Psoas muscle (tissue), 8 donors: ENCODE measurements at regions of chr20 and their contacts with region 1.

Region 1: GRCh38 chr20:32577657-32578056 is 7.5 kb downstream of the NOL4L start:
- DNase-seq: no peak
- ATAC-seq: no peak
- H3K4me3 ChIP-seq: no peak overlapping the region
- H3K27ac ChIP-seq: no peak overlapping the region
- H3K4me1 ChIP-seq: no peaks in the 10 kb centered on the region
- H3K27me3 ChIP-seq: peaks cover 0 to 2% (median 0%) of the 10 kb centered on the region in 3 donors
- CTCF ChIP-seq: no peak

Region 2: GRCh38 chr20:32509639-32510066 is 68.0 kb before region 1 on chr20:
- intact Hi-C with region 1: no loop called
- DNase-seq: no peak
- ATAC-seq: no peak
- H3K4me3 ChIP-seq: no peak overlapping the region
- H3K27ac ChIP-seq: no peak overlapping the region
- H3K4me1 ChIP-seq: no peaks in the 10 kb centered on the region
- H3K27me3 ChIP-seq: no peaks in the 10 kb centered on the region
- CTCF ChIP-seq: no peak

Region 3: DNA sequence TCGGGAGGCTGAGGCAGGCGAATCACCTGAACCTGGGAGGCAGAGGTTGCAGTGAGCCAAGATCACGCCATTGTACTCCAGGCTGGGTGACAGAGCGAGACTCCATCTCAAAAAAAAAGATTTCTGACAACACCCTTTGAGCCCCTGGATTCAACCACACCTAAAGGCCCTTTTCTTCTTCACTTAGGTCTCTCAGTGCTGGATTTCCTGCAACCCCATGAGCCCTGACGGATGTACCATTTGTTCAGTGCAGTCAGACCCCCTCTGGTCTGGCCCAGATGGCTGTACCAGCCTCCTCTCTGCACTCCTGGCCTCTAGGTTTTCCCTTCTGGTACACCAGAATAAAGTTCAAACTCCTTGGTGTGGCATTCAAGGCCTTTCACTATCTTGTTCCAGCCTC is 16.5 kb after region 1 on chr20:
- intact Hi-C with region 1: loop called in 1 of 2 experiments (anchors 2 kb)
- DNase-seq: no peak
- ATAC-seq: no peak
- H3K4me3 ChIP-seq: no peak overlapping the region
- H3K27ac ChIP-seq: no peak overlapping the region
- H3K4me1 ChIP-seq: no peaks in the 10 kb centered on the region
- H3K27me3 ChIP-seq: peaks cover 0 to 1% (median 0%) of the 10 kb centered on the region in 3 donors
- CTCF ChIP-seq: no peak

Region 4: GRCh38 chr20:32626859-32627636 is 49.4 kb after region 1 on chr20:
- intact Hi-C with region 1: no loop called
- DNase-seq: no peak
- ATAC-seq: peak in 1 of 4 donors; percentile 7
- H3K4me3 ChIP-seq: peak overlapping the region; percentile 6
- H3K27ac ChIP-seq: no peak overlapping the region
- H3K4me1 ChIP-seq: peaks cover 9% of the 10 kb centered on the region
- H3K27me3 ChIP-seq: peaks cover 0 to 10% (median 0%) of the 10 kb centered on the region in 3 donors
- CTCF ChIP-seq: no peak